Dendritic cell treated with granulocyte-macrophage colony-stimulating factor and Interleukin-4, amounts not matched to agents 40 ng/mL and 50 ng/mL, for 4 days (primary cell): ENCODE measurements at regions of chr1 and their contacts with region 1.

Region 1: GRCh38 chr1:182889997-182890396 is 50.9 kb downstream of the DHX9 start:
- H3K4me3 Mint-ChIP-seq: no peak overlapping the region
- H3K27ac Mint-ChIP-seq: peak overlapping the region; percentile 34
- H3K4me1 Mint-ChIP-seq: peaks cover 5% of the 10 kb centered on the region
- H3K27me3 Mint-ChIP-seq: no peaks in the 10 kb centered on the region

Region 2: DNA sequence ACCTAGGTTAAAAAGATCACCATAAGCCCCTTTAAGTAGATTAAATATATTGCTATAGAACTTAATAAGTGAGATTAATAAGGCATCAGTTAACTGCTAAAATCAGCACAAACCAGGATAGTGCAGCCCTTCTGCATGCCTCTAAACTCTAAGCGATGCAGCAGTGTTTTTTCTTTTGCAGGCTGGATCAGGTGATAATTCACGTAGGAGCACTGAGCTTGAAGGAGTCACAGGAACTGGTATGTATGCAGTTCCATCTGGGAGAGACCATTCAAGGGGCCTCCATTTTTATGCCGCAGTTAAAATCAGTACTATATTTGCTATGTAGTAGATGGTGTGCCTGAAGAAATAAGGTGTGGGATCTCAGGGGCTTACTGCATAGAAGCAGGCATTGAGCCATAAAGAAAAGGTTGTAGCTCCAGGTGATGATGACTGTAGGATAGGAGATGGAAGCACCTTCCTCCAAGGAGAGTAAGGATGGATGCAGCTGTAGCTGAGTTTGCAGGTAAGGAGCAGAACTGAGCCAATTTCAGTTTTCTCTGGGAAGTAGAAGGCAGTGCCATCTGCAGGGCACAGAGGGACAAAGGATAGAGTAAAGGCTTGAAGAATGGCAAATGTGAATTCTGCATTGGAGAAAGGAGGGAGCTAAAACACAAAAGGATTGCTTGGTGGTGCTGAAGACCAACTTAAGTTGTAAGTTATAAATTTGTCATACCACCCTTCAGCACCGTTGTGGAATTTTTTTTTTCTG is 77.8 kb before region 1 on chr1:
- intact Hi-C with region 1: no loop called
- H3K4me3 Mint-ChIP-seq: no peak overlapping the region
- H3K27ac Mint-ChIP-seq: no peak overlapping the region
- H3K4me1 Mint-ChIP-seq: peaks cover 20% of the 10 kb centered on the region
- H3K27me3 Mint-ChIP-seq: no peaks in the 10 kb centered on the region

Region 3: DNA sequence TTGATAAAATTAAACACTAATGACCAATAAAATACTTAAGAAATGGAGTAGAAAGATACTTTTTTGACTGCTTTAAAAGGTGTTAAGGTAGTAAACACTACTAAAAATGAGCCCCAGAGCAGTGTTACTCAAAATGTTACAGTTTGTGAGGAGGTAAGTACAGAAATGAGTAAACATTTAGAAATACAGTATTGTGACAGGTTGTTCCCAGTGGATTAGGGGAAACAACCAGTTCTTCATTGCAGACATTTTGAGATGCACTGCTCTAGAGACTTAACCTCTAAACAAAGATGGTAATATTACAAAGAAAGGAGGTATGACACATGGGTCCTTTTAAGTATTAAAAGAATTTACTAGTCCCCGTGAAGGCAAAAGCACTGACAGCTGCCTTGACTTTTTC is 38.2 kb before region 1 on chr1:
- intact Hi-C with region 1: loop called (anchors 5 kb)
- H3K4me3 Mint-ChIP-seq: no peak overlapping the region
- H3K27ac Mint-ChIP-seq: no peak overlapping the region
- H3K4me1 Mint-ChIP-seq: peaks cover 17% of the 10 kb centered on the region
- H3K27me3 Mint-ChIP-seq: no peaks in the 10 kb centered on the region